CD8-positive, alpha-beta memory T cell (primary cell): ENCODE measurements at regions of chr14 and their contacts with region 1.

Region 1: DNA sequence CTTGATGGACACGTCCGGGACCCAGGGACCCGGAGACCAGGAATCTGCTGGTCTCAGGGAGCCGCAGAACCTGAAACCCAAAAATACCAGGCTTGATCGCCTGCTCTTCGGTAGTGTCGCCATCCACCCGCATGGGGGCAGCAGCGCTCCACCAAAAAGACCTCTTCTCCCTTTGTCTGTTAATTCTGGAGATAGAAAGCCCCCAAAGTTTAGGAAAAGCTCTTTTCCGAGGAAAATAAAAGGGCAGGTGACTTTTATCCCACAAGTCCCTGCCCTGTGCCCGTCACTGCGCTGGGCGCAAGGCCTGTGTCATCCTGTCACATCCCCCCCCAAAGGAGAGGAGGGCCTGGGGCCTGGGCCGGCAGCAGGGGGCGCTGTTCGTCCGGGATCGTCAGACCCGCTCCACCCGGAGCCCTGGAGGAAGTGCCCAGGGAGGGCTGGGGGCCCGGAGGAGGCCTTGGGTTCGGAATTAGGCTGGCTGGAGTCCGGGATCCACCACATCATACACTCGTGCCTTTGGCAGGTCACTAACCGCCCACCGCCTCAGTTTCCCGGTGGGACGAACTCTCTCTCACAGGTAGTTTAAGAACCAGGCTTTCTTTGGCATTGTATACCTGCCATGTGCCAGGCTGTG is 31.9 kb downstream of the DAD1 start:
- DNase-seq: peak; percentile 84 to 94 (median 90)
- H3K4me3 ChIP-seq: peak overlapping the region; percentile 69
- H3K4me3 Mint-ChIP-seq: peak overlapping the region; percentile 84 to 94 (median 89)
- H3K27ac ChIP-seq: peak overlapping the region; percentile 92
- H3K27ac Mint-ChIP-seq: peak overlapping the region; percentile 98 to 100 (median 99)
- H3K4me1 ChIP-seq: peaks cover 91% of the 10 kb centered on the region
- H3K4me1 Mint-ChIP-seq: peaks cover 88 to 97% (median 96%) of the 10 kb centered on the region in 3 donors
- H3K27me3 ChIP-seq: no peaks in the 10 kb centered on the region
- H3K27me3 Mint-ChIP-seq: peaks cover 0 to 8% of the 10 kb centered on the region in 2 donors

Region 2: GRCh38 chr14:21723431-21724045 is 833.6 kb before region 1 on chr14:
- CTCF ChIA-PET with region 1: interaction called, 8 read pairs
- POLR2A ChIA-PET with region 1: interaction called, 11 read pairs
- DNase-seq: peak; percentile 23 to 64 (median 33)
- H3K4me3 ChIP-seq: peak overlapping the region; percentile 41
- H3K4me3 Mint-ChIP-seq: peak overlapping the region; percentile 34 to 93 (median 81)
- H3K27ac ChIP-seq: no peak overlapping the region
- H3K27ac Mint-ChIP-seq: peak overlapping the region in 7 of 8 donors; percentile 25 to 84 (median 35)
- H3K4me1 ChIP-seq: no peaks in the 10 kb centered on the region
- H3K4me1 Mint-ChIP-seq: no peaks in the 10 kb centered on the region
- H3K27me3 ChIP-seq: no peaks in the 10 kb centered on the region
- H3K27me3 Mint-ChIP-seq: peaks cover 16 to 47% of the 10 kb centered on the region in 2 donors

Region 3: DNA sequence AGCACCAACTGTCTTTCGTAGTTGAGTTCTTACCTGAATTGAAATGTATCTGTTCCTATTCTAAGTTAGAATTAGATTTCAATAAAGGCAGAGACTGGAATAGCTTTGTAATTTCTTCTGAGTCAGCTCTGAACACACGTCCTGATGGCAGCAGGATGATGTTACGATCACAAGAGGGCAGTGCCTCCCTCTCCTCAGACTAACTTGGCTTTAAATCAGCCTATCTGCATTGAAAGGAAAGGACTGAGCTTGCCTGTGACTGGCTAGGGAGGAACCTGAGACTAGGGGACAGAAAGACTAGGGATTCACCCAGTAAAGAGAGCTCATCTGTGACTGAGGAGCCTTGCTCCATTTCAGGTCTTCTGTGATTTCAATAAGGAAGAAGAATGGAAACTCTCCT is 559.8 kb before region 1 on chr14:
- CTCF ChIA-PET with region 1: interaction called, 10 read pairs
- POLR2A ChIA-PET with region 1: interaction called, 4 read pairs
- DNase-seq: peak in 3 of 5 donors; percentile 36 to 57 (median 47)
- H3K4me3 ChIP-seq: peak overlapping the region; percentile 18
- H3K4me3 Mint-ChIP-seq: peak overlapping the region; percentile 79 to 96 (median 90)
- H3K27ac ChIP-seq: no peak overlapping the region
- H3K27ac Mint-ChIP-seq: peak overlapping the region; percentile 54 to 91 (median 86)
- H3K4me1 ChIP-seq: no peaks in the 10 kb centered on the region
- H3K4me1 Mint-ChIP-seq: peaks cover 3 to 15% (median 4%) of the 10 kb centered on the region in 3 donors
- H3K27me3 ChIP-seq: no peaks in the 10 kb centered on the region
- H3K27me3 Mint-ChIP-seq: no peaks in the 10 kb centered on the region

Region 4: DNA sequence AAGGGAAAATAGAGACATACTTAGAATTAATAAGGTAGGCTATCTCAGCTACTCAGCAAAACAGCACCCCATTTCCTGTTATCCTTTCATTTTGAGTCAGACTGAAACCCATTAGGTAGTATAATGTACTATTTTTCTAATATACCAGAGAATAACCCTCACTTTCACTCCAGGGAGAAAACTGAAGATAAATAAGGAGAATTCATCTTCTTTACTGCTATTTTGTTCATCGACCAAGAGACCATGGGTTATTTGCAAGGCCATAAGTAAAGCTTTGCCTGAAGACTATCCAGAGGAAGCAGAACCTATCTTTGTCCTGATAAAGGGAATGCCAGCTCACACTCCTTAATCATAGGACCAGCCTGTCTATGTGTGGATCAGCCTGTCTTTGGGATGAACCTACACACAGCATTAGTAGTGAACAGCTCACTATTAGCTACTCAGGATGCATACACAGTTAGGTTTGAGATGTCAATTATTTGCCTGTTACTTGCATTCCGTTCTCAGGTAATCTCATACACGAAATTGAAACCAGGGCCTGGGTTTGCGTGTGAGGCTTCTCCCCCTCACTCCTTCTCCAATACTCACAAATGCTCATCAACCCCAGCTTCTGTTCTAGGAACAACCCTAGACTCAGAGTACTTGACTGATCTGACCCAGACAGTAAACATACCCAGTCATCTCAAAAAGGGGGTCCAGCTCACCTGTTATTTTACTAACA is 92.5 kb before region 1 on chr14:
- CTCF ChIA-PET with region 1: no interaction called
- POLR2A ChIA-PET with region 1: no interaction called
- DNase-seq: no peak
- H3K4me3 ChIP-seq: no peak overlapping the region
- H3K4me3 Mint-ChIP-seq: no peak overlapping the region
- H3K27ac ChIP-seq: no peak overlapping the region
- H3K27ac Mint-ChIP-seq: peak overlapping the region in 1 of 8 donors; percentile 10
- H3K4me1 ChIP-seq: no peaks in the 10 kb centered on the region
- H3K4me1 Mint-ChIP-seq: no peaks in the 10 kb centered on the region
- H3K27me3 ChIP-seq: no peaks in the 10 kb centered on the region
- H3K27me3 Mint-ChIP-seq: no peaks in the 10 kb centered on the region

Region 5: GRCh38 chr14:22512106-22512814 is 44.8 kb before region 1 on chr14:
- CTCF ChIA-PET with region 1: interaction called, 26 read pairs
- POLR2A ChIA-PET with region 1: interaction called, 285 read pairs
- DNase-seq: peak in 1 of 5 donors; percentile 55
- H3K4me3 ChIP-seq: peak overlapping the region; percentile 55
- H3K4me3 Mint-ChIP-seq: peak overlapping the region; percentile 89 to 98 (median 91)
- H3K27ac ChIP-seq: peak overlapping the region; percentile 56
- H3K27ac Mint-ChIP-seq: peak overlapping the region; percentile 87 to 98 (median 96)
- H3K4me1 ChIP-seq: peaks cover 97% of the 10 kb centered on the region
- H3K4me1 Mint-ChIP-seq: peaks cover 76 to 89% (median 82%) of the 10 kb centered on the region in 3 donors
- H3K27me3 ChIP-seq: no peaks in the 10 kb centered on the region
- H3K27me3 Mint-ChIP-seq: no peaks in the 10 kb centered on the region

Region 6: DNA sequence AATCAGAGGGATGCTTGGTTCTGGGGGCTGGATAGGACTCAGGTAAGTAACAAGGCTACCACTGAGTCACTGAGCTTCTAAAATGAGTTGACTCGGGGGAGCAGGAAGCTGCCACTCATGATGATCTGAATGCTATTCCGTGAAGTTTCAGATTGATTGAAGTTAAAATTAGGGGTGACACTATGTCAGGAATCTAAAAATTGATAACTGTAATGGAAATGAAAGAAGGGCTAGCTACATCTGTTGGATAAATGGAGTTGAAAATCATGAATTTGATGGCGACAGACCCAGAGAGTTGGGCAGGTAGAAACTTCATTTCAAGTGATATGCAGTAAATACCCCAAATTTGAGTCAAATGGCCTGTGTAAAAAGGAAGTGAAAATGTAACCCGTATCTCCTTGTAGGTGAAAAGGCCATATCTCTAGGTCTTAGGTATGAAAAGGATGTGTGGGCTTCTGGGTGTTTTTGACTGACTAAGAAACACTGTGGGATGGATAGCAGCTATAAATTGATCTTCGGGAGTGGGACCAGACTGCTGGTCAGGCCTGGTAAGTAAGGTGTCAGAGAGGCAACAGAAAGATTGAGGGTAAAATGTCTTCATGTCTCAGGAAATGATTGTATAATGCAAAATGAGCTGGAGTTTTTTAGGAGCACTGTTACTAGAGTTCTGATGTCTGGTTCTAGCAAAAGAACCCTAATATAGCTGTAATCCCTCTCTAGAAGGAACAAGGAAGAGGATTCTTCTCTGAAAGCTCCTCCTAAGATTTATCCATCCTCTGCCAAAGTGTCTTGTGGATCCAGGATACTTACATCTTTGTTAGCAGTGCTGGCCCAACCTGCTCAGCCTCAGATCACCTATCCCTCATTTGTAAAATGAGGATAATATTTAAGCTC is 25.4 kb before region 1 on chr14:
- CTCF ChIA-PET with region 1: interaction called, 69 read pairs
- POLR2A ChIA-PET with region 1: interaction called, 258 read pairs
- DNase-seq: peak in 1 of 5 donors; percentile 59
- H3K4me3 ChIP-seq: peak overlapping the region; percentile 61
- H3K4me3 Mint-ChIP-seq: peak overlapping the region; percentile 81 to 93 (median 83)
- H3K27ac ChIP-seq: peak overlapping the region; percentile 45
- H3K27ac Mint-ChIP-seq: peak overlapping the region; percentile 89 to 99 (median 96)
- H3K4me1 ChIP-seq: peaks cover 93% of the 10 kb centered on the region
- H3K4me1 Mint-ChIP-seq: peaks cover 92 to 98% (median 98%) of the 10 kb centered on the region in 3 donors
- H3K27me3 ChIP-seq: no peaks in the 10 kb centered on the region
- H3K27me3 Mint-ChIP-seq: no peaks in the 10 kb centered on the region

Region 7: DNA sequence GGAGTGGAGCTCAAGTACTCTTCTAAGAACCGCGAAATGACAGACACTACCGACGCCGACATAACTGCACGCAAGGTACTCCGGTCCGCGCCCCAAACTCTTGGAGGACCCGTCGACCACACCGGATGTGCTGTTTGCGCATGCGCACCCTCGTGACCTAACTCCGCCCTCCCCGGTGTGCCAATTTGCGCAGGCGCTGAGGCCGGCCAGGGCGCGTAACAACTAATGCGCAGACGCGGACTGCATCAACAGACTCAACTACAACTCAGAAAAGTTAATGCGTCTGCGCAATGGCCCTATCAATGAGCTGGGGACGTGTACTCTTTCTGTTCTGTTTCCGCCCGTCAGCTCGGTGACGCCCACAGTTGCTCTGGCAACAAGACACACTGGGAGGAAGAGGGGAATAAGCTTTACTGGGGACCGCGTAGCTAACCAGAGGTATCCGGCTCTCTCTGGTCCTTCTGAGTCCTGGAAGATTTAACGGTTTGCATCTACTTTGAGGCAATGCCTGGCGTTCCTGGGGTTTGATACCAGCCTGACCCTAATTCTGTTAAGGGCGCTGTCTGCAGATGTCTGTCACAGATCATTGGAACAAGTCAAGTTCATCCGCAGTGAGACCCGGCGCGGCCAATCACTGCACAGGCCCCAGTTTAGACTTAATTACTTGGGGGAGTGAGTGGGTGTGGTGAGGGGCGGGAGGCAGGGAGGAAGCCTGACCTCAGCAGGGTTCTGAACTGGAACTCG is 32.2 kb after region 1 on chr14 and contains the start of gene DAD1:
- CTCF ChIA-PET with region 1: interaction called, 7 read pairs
- POLR2A ChIA-PET with region 1: interaction called, 14 read pairs
- DNase-seq: peak; percentile 98 to 100 (median 100)
- H3K4me3 ChIP-seq: peak within 1 kb of the TSS; percentile 90
- H3K4me3 Mint-ChIP-seq: peak within 1 kb of the TSS; percentile 92 to 99 (median 97)
- H3K27ac ChIP-seq: peak within 1 kb of the TSS; percentile 98
- H3K27ac Mint-ChIP-seq: peak within 1 kb of the TSS; percentile 95 to 100 (median 100)
- H3K4me1 ChIP-seq: peaks cover 45% of the 10 kb centered on the region
- H3K4me1 Mint-ChIP-seq: peaks cover 52 to 61% (median 57%) of the 10 kb centered on the region in 3 donors
- H3K27me3 ChIP-seq: no peaks in the 10 kb centered on the region
- H3K27me3 Mint-ChIP-seq: peaks cover 4% of the 10 kb centered on the region in 2 donors
- total RNA-seq, gene DAD1: 329 to 353 TPM

Region 8: GRCh38 chr14:22822571-22823098 is 265.5 kb after region 1 on chr14:
- CTCF ChIA-PET with region 1: interaction called, 15 read pairs
- POLR2A ChIA-PET with region 1: no interaction called
- DNase-seq: peak; percentile 53 to 81 (median 57)
- H3K4me3 ChIP-seq: peak overlapping the region; percentile 13
- H3K4me3 Mint-ChIP-seq: peak overlapping the region in 6 of 7 donors; percentile 41 to 72 (median 66)
- H3K27ac ChIP-seq: no peak overlapping the region
- H3K27ac Mint-ChIP-seq: peak overlapping the region in 1 of 8 donors; percentile 15
- H3K4me1 ChIP-seq: peaks cover 19% of the 10 kb centered on the region
- H3K4me1 Mint-ChIP-seq: peaks cover 8 to 12% (median 9%) of the 10 kb centered on the region in 3 donors
- H3K27me3 ChIP-seq: no peaks in the 10 kb centered on the region
- H3K27me3 Mint-ChIP-seq: peaks cover 35 to 45% of the 10 kb centered on the region in 2 donors